HEK293 (cell line): ENCODE measurements at regions of chr22 and their contacts with region 1.

Region 1: GRCh38 chr22:22666307-22667091 is 22.1 kb downstream of the GGTLC2 start:
- H3K4me3 ChIP-seq: no peak overlapping the region
- H3K27ac ChIP-seq: no peak overlapping the region
- H3K4me1 ChIP-seq: no peaks in the 10 kb centered on the region
- CTCF ChIP-seq: peak; percentile 65

Region 2: DNA sequence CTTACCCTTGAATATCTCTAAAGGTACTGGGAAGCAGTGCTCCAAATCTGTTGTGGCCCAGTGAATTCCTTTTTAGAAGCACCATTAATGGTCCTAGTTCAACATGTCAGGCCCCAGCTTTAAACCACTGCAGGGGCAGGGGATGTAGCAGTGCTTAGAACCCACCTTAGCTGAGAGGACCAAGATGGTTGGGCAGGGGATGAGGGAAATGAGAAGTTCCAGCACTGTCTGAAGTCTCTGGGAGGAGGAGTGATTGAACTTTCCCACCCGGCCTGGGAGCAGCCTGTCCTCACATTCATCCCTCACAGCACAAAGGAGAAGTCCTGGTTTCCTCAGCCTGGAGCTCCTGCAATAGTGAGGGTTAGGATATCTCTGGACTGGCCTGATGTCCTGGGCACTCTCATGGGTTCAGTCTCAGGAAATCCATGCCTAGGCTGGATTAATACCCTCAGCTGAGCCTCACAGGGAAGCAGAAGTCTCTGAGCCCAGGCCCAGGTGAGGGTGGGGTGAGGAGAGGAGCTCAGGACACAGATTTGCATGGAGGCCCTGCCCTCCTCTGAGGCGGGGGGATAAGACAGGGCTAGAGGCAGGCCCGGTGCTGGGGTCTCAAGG is 78.8 kb before region 1 on chr22:
- CTCF ChIA-PET with region 1: interaction called, 19 read pairs
- POLR2A ChIA-PET with region 1: no interaction called
- H3K4me3 ChIP-seq: no peak overlapping the region
- H3K27ac ChIP-seq: no peak overlapping the region
- H3K4me1 ChIP-seq: no peaks in the 10 kb centered on the region
- CTCF ChIP-seq: no peak

Region 3: DNA sequence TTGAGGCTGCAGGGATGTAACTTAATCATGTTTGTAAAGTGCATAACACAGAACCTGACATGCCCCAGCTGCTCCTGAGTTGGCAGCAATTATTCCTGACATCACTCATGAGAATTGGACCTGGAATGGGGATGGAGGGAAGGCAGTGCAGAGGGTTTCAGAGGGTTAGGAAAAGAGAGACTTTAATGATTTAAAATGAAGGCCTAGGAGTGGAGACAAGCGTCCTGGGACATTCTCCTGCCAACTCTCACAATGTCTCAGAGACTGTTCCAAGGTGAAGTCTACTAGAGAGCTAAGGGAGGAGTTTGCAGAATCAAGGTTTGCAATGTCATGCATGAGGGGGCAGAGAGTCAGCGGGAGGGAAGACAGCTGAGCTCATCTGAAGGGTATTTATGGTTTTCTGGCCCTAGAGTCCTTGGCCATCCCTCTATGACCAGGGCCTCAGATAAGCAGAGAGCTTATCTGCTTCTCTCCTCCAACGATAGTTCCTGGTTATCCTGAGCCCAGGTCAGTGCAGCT is 14.8 kb after region 1 on chr22:
- CTCF ChIA-PET with region 1: interaction called, 88 read pairs
- POLR2A ChIA-PET with region 1: interaction called, 3 read pairs
- H3K4me3 ChIP-seq: no peak overlapping the region
- H3K27ac ChIP-seq: no peak overlapping the region
- H3K4me1 ChIP-seq: no peaks in the 10 kb centered on the region
- CTCF ChIP-seq: no peak

Region 4: GRCh38 chr22:22702237-22703202 is 36.0 kb after region 1 on chr22:
- CTCF ChIA-PET with region 1: interaction called, 21 read pairs
- POLR2A ChIA-PET with region 1: no interaction called
- H3K4me3 ChIP-seq: no peak overlapping the region
- H3K27ac ChIP-seq: no peak overlapping the region
- H3K4me1 ChIP-seq: no peaks in the 10 kb centered on the region
- CTCF ChIP-seq: 0 out of 2 replicates have a peak, but pooled peaks have one; percentile 18

Region 5: GRCh38 chr22:22753526-22754267 is 87.2 kb after region 1 on chr22:
- CTCF ChIA-PET with region 1: interaction called, 16 read pairs
- POLR2A ChIA-PET with region 1: no interaction called
- H3K4me3 ChIP-seq: no peak overlapping the region
- H3K27ac ChIP-seq: no peak overlapping the region
- H3K4me1 ChIP-seq: no peaks in the 10 kb centered on the region
- CTCF ChIP-seq: peak; percentile 57; the same call in 1 of the 2 replicates